ENCODE measurements at regions of chr19 and their contacts with region 1.

Region 1: DNA sequence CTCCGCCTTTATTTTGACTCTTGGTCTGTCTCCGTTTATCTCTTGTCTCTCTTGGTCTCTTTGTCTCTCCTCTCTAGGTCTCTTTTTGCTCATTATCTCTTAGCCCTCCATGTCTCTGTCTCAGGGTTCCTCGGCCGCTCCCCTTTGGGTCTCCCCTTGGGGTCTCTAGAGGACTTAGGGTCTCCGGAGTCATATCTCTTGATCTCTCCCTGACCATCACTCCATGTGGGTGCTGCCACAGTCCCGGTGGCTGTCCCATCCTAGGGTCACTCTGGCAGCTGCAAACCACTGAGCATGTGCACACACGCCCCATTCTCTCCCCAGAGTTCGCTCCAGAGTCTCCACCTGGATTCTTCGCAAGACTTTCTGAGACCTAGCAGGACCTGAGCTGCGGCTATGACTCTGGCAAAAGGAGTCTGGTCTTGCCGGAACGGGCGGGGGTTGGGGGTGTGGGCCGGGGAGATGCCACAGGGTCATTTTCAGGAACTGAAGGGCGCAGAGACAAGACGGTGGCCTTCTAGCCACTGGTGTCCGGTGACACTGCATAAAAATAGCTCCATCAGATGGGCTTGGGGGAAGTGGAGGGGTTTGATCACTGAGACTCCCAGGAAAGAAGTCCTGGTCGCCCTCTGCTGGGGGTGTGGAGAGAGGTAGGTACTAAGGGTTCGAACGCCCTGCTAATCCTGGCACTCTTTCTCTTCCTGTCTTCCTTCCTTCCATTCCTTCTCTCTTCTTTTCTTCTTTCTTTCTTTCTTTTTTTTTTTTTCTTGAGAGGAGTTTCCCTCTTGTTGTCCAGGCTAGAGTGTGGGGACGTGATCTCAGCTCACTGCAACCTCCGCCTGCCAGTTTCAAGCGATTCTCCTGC is 1.2 kb upstream of the KCNA7 start:
- DNase-seq: peak in 1 of 2 experiments; percentile 56
- H3K4me3 ChIP-seq: no peak overlapping the region
- H3K27ac ChIP-seq: no peak overlapping the region
- H3K4me1 ChIP-seq: peaks cover 10% of the 10 kb centered on the region; the same call in 1 of the 2 replicates
- H3K27me3 ChIP-seq: peaks cover 29% of the 10 kb centered on the region
- CTCF ChIP-seq: peak; percentile 23; the same call in 1 of the 2 replicates

Region 2: DNA sequence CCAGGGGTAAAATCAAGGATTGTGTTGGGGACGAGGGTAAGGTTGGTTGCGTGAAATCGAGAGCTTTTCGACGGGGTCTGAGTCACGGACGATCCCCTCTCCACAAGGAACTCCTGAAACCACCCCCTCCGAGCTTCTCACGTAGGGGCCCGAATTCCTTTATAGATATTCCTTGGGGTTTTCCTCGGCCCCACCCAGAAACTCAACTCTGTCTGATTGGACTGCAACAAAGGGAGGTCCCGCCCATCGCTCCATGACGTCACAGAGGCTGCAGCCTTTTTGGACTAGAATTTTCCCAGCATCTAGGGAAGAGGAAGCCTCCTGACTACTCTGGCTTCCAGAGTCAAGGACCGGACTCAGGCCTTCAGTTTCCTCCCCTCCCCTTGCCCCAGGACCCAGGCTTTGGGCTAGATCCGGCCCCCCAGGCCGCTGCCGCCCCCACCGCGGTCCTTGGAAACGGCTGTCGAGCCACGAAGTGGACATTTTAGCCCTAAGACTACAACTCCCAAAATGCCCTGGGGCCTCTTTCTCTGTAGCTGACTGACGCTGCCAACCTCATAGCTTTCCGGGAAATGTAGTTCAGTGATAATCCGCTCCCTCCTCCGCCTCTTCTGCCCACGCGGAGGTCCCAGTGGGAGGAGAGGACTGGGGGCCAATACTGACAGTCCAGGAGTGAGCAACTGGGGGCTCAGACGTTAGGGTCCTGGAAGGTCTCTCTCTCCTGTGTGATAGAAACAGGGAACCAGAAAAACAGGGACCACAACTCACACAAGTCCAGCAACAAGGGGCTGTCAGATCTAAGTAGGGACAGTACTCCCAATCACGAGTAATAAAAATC is 326.8 kb before region 1 on chr19 and contains the start of gene IZUMO1:
- CTCF ChIA-PET with region 1: no interaction called
- POLR2A ChIA-PET with region 1: no interaction called
- intact Hi-C with region 1: no loop called
- DNase-seq: peak; percentile 70 to 76
- H3K4me3 ChIP-seq: peak within 1 kb of the TSS; percentile 60
- H3K27ac ChIP-seq: no peak within 1 kb of the TSS
- H3K4me1 ChIP-seq: peaks cover 8% of the 10 kb centered on the region
- H3K27me3 ChIP-seq: no peaks in the 10 kb centered on the region
- CTCF ChIP-seq: no peak
- total RNA-seq, gene IZUMO1: 2.2 and 3.0 TPM in 2 replicates

Region 3: GRCh38 chr19:48999481-49000325 is 74.0 kb before region 1 on chr19:
- CTCF ChIA-PET with region 1: interaction called, 12 read pairs
- POLR2A ChIA-PET with region 1: no interaction called
- intact Hi-C with region 1: loop called (anchors 2 kb)
- DNase-seq: peak in 1 of 2 experiments; percentile 51
- H3K4me3 ChIP-seq: no peak overlapping the region
- H3K27ac ChIP-seq: no peak overlapping the region
- H3K4me1 ChIP-seq: peaks cover 8% of the 10 kb centered on the region
- H3K27me3 ChIP-seq: no peaks in the 10 kb centered on the region
- CTCF ChIP-seq: peak; percentile 71

Region 4: DNA sequence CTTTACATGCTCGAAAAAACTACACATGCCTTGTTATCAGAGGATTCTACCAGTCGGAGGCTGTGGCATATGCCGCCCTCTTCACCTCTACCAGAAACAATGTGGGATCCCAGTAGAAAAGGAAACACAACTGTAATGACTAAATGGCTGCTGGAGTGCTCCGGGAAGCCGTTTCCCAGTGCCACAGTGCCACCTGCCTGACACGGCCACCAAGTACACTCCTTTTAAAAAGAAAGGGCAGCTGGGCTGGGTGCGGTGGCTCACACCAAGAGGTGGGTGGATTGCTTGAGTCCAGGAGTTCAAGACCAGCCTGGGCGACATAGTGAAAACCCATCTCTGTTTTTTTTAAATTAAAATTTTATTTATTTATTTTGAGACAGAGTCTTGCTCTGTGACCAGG is 151.1 kb after region 1 on chr19:
- CTCF ChIA-PET with region 1: interaction called, 3 read pairs
- POLR2A ChIA-PET with region 1: no interaction called
- intact Hi-C with region 1: loop called (anchors 2 kb)
- DNase-seq: peak; percentile 73 to 84
- H3K4me3 ChIP-seq: no peak overlapping the region
- H3K27ac ChIP-seq: no peak overlapping the region
- H3K4me1 ChIP-seq: no peaks in the 10 kb centered on the region
- H3K27me3 ChIP-seq: no peaks in the 10 kb centered on the region
- CTCF ChIP-seq: peak; percentile 91